Body of pancreas (tissue), 4 donors: ENCODE measurements at regions of chr2 and their contacts with region 1.

Region 1: GRCh38 chr2:11539317-11540152 is 5.7 kb downstream of the GREB1 start:
- DNase-seq: peak; percentile 86 to 94 (median 94)
- ATAC-seq: peak; percentile 93
- H3K4me3 ChIP-seq: no peak overlapping the region
- H3K27ac ChIP-seq: peak overlapping the region; percentile 63 to 78 (median 67)
- H3K4me1 ChIP-seq: peaks cover 69% of the 10 kb centered on the region
- H3K27me3 ChIP-seq: no peaks in the 10 kb centered on the region
- CTCF ChIP-seq: peak in 2 of 7 experiments; percentile 8 to 13
- POLR2A ChIP-seq: peak in 2 of 3 donors; percentile 21 to 41

Region 2: GRCh38 chr2:11187083-11187619 is 352.4 kb before region 1 on chr2:
- intact Hi-C with region 1: no loop called
- DNase-seq: no peak
- ATAC-seq: no peak
- H3K4me3 ChIP-seq: no peak overlapping the region
- H3K27ac ChIP-seq: no peak overlapping the region
- H3K4me1 ChIP-seq: no peaks in the 10 kb centered on the region
- H3K27me3 ChIP-seq: no peaks in the 10 kb centered on the region
- CTCF ChIP-seq: no peak
- POLR2A ChIP-seq: no peak

Region 3: GRCh38 chr2:11498543-11499080 is 40.9 kb before region 1 on chr2:
- intact Hi-C with region 1: loop called (anchors 10 kb)
- DNase-seq: peak; percentile 57 to 82 (median 72)
- ATAC-seq: peak; percentile 88
- H3K4me3 ChIP-seq: no peak overlapping the region
- H3K27ac ChIP-seq: peak overlapping the region in 1 of 4 donors; percentile 23
- H3K4me1 ChIP-seq: peaks cover 14% of the 10 kb centered on the region
- H3K27me3 ChIP-seq: no peaks in the 10 kb centered on the region
- CTCF ChIP-seq: peak in 3 of 7 experiments; percentile 6 to 12 (median 11)
- POLR2A ChIP-seq: no peak

Region 4: DNA sequence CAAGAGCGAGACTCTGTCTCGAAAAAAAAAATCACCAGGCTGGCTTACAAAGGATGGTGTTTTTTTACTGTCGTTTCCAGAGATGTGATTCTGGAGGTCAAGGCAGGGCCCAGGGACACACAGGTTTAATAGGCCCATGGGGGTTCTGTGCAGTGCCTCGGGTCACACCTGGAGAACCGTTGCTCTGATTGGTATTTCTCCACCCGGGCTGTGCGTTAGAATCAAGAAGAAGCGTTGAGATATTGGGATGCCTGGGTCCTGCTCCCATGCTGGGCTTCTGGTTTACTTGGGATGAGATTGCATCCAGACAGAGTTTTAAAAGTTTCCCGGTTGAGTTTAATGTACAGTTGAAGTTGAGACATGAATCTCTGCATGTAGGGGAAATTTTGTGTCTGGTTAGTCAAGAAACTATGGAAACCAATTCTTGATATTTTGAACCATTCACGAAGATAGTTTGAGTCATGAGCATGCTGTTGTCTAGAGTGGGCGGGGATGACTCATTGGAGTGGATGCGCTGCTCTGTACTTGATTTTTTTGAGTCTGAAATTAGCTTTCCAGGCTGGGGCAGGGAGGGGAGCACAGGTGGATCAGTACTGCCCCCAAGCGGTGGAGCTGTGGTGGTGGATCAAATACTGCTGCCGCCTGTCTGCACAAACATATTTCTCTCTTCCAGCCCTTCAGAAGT is 44.4 kb after region 1 on chr2:
- intact Hi-C with region 1: no loop called
- DNase-seq: peak; percentile 72 to 80 (median 76)
- ATAC-seq: peak; percentile 72
- H3K4me3 ChIP-seq: no peak overlapping the region
- H3K27ac ChIP-seq: peak overlapping the region in 2 of 4 donors; percentile 21
- H3K4me1 ChIP-seq: peaks cover 14% of the 10 kb centered on the region
- H3K27me3 ChIP-seq: no peaks in the 10 kb centered on the region
- CTCF ChIP-seq: peak; percentile 80 to 95 (median 85)
- POLR2A ChIP-seq: no peak